IMR-90 (cell line): ENCODE measurements at regions of chr2 and their contacts with region 1.

Region 1: DNA sequence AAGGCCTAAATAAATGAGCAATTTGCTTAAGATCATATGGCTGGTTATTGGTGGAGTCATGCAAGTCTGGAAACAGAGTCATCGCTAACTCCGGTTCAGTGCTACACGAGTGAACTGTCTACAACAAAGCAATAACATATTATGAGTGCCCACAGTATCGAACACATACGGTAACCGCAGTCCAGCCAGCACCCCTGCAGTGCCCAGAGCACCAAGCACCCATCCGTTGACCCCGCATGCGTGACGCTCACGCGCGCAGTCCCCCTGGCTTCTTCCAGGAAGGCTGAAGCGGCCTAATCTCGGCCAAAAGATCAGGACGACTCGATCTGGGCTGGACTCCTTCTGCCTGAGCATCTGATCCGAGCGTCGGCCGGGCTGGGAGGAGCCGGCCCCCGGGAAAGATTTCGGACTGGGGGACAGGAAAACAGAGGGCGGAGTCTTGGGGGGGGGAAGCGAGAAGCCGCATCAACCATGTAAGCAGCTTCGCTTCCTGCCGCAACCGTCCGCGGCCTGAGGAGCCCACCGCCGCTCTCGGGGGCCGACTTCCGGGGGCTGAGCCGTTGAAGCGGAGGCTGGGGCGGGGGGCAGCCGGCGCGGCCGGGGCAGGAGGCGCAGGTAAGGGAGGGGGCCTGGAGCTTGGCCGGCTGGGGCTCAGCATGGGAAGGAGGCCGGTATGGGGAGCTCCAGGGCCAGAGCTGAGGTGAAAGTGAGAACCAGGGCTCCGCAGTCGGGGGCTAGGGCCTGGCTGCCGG is at the start of gene PIKFYVE:
- DNase-seq: peak; percentile 98
- ATAC-seq: peak; percentile 98
- H3K4me3 ChIP-seq: peak within 1 kb of the TSS; percentile 98
- H3K27ac ChIP-seq: peak within 1 kb of the TSS; percentile 65
- H3K4me1 ChIP-seq: peaks cover 5% of the 10 kb centered on the region; the same call in 1 of the 2 replicates
- H3K27me3 ChIP-seq: no peaks in the 10 kb centered on the region
- CTCF ChIP-seq: no peak
- POLR2A ChIP-seq: peak; percentile 83
- RAD21 ChIP-seq: no peak
- total RNA-seq, gene PIKFYVE: 31.4 and 34.6 TPM in 2 replicates

Region 2: DNA sequence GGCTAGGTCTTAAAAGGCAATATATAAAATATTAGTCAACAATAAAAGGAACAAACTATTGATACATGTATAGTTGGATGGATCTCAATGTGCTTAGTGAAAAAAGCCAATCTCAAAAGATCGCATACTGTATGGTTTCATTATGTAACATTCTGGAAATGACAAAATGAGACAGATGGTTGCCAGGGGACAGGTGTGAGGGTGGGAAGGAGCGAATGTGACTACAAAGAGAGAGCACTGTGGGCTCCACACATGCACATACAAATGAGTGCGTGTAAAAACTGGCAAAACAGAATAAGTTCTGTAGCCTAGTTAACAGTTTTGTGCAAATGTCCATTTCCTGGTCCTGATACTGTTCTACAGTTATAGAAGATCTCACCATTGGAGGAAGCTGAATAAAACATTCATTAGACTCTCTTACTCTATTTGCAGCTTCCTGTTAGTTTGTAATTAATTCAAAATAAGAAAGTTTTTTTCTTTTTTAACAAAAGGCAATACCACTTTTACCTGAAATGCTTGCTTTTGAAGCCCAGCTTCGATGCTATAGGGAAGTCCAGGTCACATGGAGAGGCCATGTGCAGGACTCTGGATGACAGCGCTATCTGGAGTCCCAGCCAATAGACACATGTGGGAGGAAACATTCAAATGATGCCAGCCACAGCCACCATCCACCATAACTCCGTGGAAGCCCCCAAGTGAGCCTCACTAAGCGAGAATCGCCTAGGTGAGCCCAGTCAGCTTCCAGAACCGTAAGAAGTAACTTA is 55.1 kb before region 1 on chr2:
- CTCF ChIA-PET with region 1: no interaction called
- POLR2A ChIA-PET with region 1: interaction called, 15 read pairs
- dilution Hi-C with region 1: no loop called
- in situ Hi-C with region 1: no loop called
- intact Hi-C with region 1: no loop called
- DNase-seq: no peak
- ATAC-seq: no peak
- H3K4me3 ChIP-seq: no peak overlapping the region
- H3K27ac ChIP-seq: no peak overlapping the region
- H3K4me1 ChIP-seq: no peaks in the 10 kb centered on the region
- H3K27me3 ChIP-seq: no peaks in the 10 kb centered on the region; the same call in 1 of the 2 replicates
- CTCF ChIP-seq: no peak
- POLR2A ChIP-seq: no peak
- RAD21 ChIP-seq: no peak